ENCODE measurements at regions of chr12 and their contacts with region 1.

Region 1: GRCh38 chr12:119988782-119989668 is at the start of gene BICDL1:
- DNase-seq: peak; percentile 97
- H3K4me3 Mint-ChIP-seq: peak within 1 kb of the TSS; percentile 81
- H3K27ac Mint-ChIP-seq: peak within 1 kb of the TSS; percentile 82
- H3K4me1 Mint-ChIP-seq: peaks cover 39% of the 10 kb centered on the region
- H3K27me3 Mint-ChIP-seq: peaks cover 7% of the 10 kb centered on the region
- total RNA-seq, gene BICDL1: 51.2 to 65.9 TPM

Region 2: GRCh38 chr12:119565404-119565803 is 423.6 kb before region 1 on chr12:
- CTCF ChIA-PET with region 1: no interaction called
- POLR2A ChIA-PET with region 1: no interaction called
- DNase-seq: no peak
- H3K4me3 Mint-ChIP-seq: no peak overlapping the region
- H3K27ac Mint-ChIP-seq: no peak overlapping the region
- H3K4me1 Mint-ChIP-seq: no peaks in the 10 kb centered on the region
- H3K27me3 Mint-ChIP-seq: no peaks in the 10 kb centered on the region

Region 3: GRCh38 chr12:119936705-119937311 is 52.2 kb before region 1 on chr12:
- CTCF ChIA-PET with region 1: no interaction called
- POLR2A ChIA-PET with region 1: no interaction called
- DNase-seq: no peak
- H3K4me3 Mint-ChIP-seq: no peak overlapping the region
- H3K27ac Mint-ChIP-seq: no peak overlapping the region
- H3K4me1 Mint-ChIP-seq: peaks cover 1% of the 10 kb centered on the region
- H3K27me3 Mint-ChIP-seq: peaks cover 3% of the 10 kb centered on the region

Region 4: DNA sequence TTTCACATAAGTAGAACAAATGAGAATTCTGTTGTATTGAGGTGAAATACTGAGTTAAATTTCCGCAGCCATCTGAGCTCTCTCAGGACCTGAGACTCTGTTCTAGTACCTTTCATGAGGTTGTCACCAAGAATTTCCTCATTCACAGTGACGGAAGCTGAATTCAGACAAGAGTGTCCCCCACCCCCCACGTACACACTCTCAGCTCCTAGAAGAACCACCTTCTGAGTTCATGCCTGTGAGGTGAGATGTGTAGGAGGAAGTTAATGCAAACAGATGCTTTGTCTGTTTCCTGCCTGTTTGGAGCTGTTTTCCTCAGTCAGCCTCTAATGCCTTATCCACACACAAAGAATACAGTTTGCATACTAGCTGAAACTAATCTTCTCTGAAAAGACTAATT is 18.2 kb after region 1 on chr12:
- CTCF ChIA-PET with region 1: interaction called, 11 read pairs
- POLR2A ChIA-PET with region 1: interaction called, 7 read pairs
- DNase-seq: peak; percentile 83
- H3K4me3 Mint-ChIP-seq: peak overlapping the region; percentile 37
- H3K27ac Mint-ChIP-seq: peak overlapping the region; percentile 89
- H3K4me1 Mint-ChIP-seq: peaks cover 70% of the 10 kb centered on the region
- H3K27me3 Mint-ChIP-seq: no peaks in the 10 kb centered on the region

Region 5: DNA sequence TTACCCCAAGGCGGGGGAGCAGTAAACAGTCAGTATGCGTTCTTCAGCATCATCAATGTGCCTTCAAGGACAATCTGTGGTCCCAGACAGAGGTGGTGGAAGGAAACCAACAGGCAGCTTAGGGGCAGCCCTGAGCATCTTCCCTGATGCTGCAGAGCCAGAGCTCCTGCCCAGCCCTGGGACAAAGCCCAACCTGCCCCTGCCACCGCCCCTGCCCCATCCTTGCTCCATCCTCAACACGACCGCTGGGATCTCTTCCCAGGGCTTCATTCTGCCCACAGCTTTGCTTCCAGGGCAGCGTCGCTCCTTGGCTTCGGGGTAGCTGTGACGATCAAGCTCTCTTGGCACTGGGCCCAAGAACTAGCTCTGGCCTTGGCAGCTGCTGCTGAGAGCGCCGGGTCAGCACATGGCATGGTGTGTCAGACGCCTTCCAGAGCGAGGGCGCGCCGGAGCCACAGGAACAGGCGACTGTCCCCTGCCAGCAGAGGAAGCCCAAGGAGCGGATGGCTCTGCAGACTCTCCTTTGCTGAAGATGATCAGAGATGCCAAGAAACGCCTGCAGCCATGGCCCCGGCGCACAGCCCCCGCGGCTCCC is 111.5 kb after region 1 on chr12:
- CTCF ChIA-PET with region 1: no interaction called
- POLR2A ChIA-PET with region 1: interaction called, 13 read pairs
- DNase-seq: no peak
- H3K4me3 Mint-ChIP-seq: no peak overlapping the region
- H3K27ac Mint-ChIP-seq: peak overlapping the region; percentile 25
- H3K4me1 Mint-ChIP-seq: peaks cover 24% of the 10 kb centered on the region
- H3K27me3 Mint-ChIP-seq: no peaks in the 10 kb centered on the region

Measured in activated CD4-positive, alpha-beta T cell treated with anti-CD3 and anti-CD28 coated beads, Interleukin-2, amount 10 ng/mL, durations not matched to agents 7 days and 5 days (primary cell).